Colonic mucosa (tissue), 4 donors: ENCODE measurements at regions of chr5 and their contacts with region 1.

Region 1: DNA sequence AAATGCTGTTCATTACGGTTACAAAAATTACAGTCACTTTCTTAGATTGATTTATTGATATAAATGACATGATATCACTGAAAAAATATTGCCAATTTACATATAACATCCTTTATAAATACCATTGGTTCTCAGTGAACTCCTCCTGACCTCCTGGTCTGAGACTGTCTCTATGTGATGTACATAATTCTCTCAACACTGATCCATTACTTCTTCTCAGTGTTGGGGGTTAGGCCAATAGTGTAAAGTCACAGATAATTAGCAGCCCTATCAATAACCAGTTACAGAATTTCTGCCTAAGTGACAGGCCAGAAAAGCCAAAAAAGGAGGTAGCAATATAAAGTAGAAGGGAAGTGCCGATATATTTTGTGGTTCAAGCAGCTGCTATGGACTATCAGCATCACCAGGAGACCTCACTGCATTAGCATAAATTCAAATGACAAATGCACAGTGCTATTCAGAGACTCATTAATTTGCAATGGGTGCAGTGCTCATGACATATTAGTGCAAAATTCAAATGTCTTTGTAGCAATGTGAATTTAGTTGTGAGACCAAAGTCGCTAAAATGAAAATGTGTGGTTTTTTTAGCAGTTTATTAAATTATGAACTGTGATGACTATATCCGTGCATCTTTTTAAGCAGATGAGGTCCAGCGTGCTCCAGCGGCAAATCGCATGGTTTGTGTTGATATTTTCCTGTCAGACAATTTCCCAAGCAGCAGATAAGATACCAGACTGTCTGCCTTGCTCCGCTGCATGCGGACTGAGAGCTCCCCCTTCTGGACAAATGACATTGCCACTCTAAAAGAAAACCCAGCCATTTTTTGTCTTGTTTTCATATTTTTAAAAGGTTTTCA is 144.6 kb downstream of the CETN3 start:
- DNase-seq: peak; percentile 60
- H3K4me3 ChIP-seq: no peak overlapping the region
- H3K27ac ChIP-seq: no peak overlapping the region
- H3K4me1 ChIP-seq: no peaks in the 10 kb centered on the region
- H3K27me3 ChIP-seq: no peaks in the 10 kb centered on the region
- CTCF ChIP-seq: peak; percentile 84

Region 2: DNA sequence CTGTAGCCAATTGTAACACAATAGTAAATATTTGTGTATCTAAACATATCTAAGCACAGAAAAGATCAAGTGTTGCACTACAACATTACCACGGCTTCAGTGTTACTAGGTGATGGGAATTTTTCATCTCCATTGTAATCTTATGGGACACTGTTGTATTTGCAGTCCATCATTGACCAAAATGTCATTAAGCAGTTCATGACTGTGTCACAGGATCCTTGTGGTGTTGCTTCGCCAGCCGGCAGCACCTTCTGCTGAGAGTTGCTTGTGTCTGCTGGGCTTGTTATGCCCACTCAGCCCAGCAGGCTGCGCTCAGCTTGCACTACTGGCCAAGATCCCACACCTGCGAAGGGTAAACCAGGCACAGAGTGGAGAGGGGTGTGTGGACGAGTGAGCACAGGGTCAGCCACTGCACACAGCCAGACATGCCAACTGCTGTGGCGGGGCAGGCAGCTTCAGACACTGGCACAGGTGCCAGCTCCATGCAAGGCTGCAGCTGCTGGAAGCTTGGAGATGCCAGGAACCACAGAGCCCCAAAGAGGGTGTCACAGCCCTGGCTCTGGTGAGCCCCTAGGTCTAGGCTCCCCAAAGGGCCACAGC is 129.0 kb before region 1 on chr5:
- intact Hi-C with region 1: loop called (anchors 2 kb)
- DNase-seq: peak; percentile 34
- H3K4me3 ChIP-seq: no peak overlapping the region
- H3K27ac ChIP-seq: no peak overlapping the region
- H3K4me1 ChIP-seq: no peaks in the 10 kb centered on the region
- H3K27me3 ChIP-seq: no peaks in the 10 kb centered on the region
- CTCF ChIP-seq: peak; percentile 60